ENCODE measurements at regions of chr13 and their contacts with region 1.

Region 1: GRCh38 chr13:70104481-70104880 is 3.1 kb upstream of the ATXN8OS start:
- DNase-seq: no peak
- H3K4me3 ChIP-seq: no peak overlapping the region
- H3K27ac ChIP-seq: no peak overlapping the region
- H3K4me1 ChIP-seq: no peaks in the 10 kb centered on the region
- H3K27me3 ChIP-seq: no peaks in the 10 kb centered on the region
- CTCF ChIP-seq: no peak
- POLR2A ChIP-seq: no peak

Region 2: DNA sequence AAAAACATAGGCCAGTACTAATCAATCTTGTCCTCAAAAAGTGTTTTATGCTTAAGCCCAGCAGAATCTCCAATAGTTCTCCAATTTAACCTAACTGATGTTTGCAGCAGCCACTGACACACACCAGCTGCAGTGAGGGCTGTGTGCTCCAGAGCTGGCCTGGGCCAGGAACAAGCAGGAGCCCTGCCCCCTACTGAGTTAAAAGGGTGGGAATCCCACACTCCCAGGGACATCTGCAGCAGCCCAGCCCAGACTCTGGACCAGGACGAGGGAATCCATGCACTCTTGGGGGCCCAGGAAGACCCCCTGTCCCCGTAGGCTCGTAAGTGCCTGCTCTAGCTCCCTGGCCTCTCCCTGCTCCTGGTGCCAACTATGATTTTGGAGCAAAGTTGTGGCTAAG is 88.4 kb before region 1 on chr13:
- intact Hi-C with region 1: no loop called
- DNase-seq: no peak
- H3K4me3 ChIP-seq: no peak overlapping the region
- H3K27ac ChIP-seq: no peak overlapping the region
- H3K4me1 ChIP-seq: no peaks in the 10 kb centered on the region
- H3K27me3 ChIP-seq: no peaks in the 10 kb centered on the region
- CTCF ChIP-seq: no peak
- POLR2A ChIP-seq: no peak

Region 3: GRCh38 chr13:70568571-70568970 is 464.1 kb after region 1 on chr13:
- intact Hi-C with region 1: loop called in 1 of 2 experiments (anchors 5 kb)
- DNase-seq: peak in 2 of 7 donors; percentile 16 to 18
- H3K4me3 ChIP-seq: no peak overlapping the region
- H3K27ac ChIP-seq: no peak overlapping the region
- H3K4me1 ChIP-seq: no peaks in the 10 kb centered on the region
- H3K27me3 ChIP-seq: no peaks in the 10 kb centered on the region
- CTCF ChIP-seq: peak; percentile 62 to 81 (median 70)
- POLR2A ChIP-seq: no peak